Activated CD8-positive, alpha-beta memory T cell treated with anti-CD3 and anti-CD28 coated beads, Interleukin-2, amount 10 ng/mL, durations not matched to agents 7 days and 5 days (primary cell): ENCODE measurements at regions of chr10 and their contacts with region 1.

Region 1: DNA sequence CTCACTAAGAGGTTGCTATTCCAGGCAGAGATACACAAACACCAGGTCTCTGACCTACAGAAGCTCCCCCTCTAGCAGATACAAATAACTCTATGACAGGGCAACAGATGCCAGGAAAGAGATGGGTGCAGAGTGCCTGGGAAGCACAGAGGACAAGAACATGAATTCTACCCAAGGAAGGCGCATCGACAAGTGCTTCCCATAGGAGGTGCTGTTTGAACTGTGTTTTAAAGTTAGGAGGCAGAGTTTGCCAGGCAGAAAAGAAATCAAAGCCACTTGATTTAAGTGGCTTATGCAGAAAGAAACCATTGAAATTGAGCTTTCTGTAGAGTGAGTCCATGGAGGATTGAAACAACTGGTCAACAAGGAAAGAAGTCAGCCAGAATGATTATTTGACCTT is 35.3 kb upstream of the EGR2 start:
- DNase-seq: no peak
- ATAC-seq: no peak
- H3K4me3 Mint-ChIP-seq: no peak overlapping the region
- H3K27ac Mint-ChIP-seq: peak overlapping the region; percentile 13
- H3K4me1 Mint-ChIP-seq: peaks cover 55% of the 10 kb centered on the region
- H3K27me3 Mint-ChIP-seq: peaks cover 10% of the 10 kb centered on the region

Region 2: DNA sequence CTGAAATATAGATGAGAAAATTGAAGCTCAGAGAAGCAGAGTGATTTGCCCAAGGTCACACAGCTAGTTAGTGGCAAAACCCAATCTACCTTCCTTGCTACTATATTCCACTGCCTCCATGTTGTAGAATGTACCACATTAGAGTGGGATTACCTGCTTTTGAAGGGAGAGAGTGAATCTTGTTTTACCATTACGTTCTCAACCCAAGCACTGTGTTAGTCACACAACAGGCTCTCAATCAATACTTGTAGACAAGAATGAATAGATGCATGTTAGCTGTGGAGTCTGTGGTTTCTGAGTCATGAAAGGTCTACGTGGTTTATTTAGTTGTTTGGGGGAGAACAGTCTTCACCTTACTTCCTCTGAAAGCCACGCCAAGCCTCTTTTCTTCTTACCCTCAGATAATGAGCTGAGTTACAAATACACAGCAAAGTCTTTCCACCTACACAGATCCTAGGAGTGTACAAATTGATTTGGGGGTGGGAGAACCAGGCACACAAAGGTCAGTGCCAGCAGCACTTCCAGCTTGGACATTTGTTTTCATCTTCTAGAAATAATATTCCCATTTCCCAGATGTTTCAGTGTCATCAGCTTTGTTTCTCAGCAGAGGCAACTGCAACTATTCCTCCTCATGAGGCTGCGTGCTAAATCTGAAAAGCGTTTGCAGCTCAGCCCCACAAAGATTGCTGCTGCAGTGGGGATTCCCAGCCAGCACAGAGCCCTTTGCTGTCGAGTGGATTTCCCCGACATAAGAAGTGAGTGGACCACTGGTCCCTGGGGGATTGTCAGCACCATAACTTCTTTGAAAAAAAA is 118.4 kb before region 1 on chr10:
- CTCF ChIA-PET with region 1: interaction called, 11 read pairs
- DNase-seq: peak; percentile 78
- ATAC-seq: peak; percentile 90
- H3K4me3 Mint-ChIP-seq: no peak overlapping the region
- H3K27ac Mint-ChIP-seq: no peak overlapping the region
- H3K4me1 Mint-ChIP-seq: peaks cover 21% of the 10 kb centered on the region
- H3K27me3 Mint-ChIP-seq: peaks cover 26% of the 10 kb centered on the region

Region 3: DNA sequence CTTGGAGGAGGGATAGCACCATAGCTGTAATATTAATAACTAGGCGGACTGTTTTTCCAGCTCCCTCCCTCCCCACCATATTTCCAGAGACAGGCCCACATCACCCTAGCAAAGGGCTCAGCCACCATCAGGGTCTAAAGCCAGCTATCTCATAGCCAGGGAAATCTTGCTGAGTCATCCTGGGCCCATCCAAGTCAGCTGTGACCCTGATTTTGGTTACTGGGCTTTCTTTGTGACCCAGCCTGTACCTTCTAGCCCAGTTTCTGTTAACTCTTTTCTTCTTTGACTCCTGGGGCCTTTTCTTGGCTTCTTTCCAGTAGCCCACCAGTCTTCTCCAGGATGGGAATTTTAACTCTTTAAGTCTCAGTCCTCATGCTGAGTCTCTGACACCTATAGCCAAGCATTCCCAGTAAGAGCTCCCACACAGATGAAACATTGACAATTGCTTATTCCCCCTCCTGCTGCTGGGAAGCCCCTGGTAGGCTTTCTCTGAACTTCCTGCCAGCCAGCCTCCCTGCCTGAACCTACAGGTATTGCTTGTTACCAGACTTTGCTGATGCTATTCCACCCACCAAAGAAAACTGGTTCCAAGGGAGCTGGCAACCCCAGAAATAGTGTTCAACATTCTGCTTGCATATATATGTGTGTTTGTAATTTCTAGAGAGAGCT is 81.7 kb before region 1 on chr10:
- CTCF ChIA-PET with region 1: no interaction called
- DNase-seq: no peak
- ATAC-seq: no peak
- H3K4me3 Mint-ChIP-seq: no peak overlapping the region
- H3K27ac Mint-ChIP-seq: no peak overlapping the region
- H3K4me1 Mint-ChIP-seq: peaks cover 10% of the 10 kb centered on the region
- H3K27me3 Mint-ChIP-seq: peaks cover 19% of the 10 kb centered on the region

Region 4: DNA sequence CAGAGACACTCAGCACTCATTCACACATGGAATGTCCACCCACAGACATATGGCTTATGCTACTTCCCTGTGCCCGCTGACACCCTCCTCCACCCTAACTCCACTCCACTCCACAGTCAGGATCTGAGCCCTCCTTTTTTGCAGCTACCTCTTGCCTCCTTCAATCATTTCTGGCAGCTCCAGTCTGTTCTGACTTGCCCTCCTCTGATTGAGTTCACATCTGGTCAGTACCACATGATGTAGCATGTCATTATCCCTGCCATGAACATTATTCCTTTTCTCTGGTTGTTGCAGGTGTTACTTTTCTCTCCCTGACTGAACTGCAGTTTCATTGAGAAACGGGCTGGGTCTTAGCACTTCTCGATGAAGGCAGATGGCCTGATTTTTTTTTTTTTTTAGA is 94.8 kb after region 1 on chr10:
- CTCF ChIA-PET with region 1: no interaction called
- DNase-seq: no peak
- ATAC-seq: no peak
- H3K4me3 Mint-ChIP-seq: no peak overlapping the region
- H3K27ac Mint-ChIP-seq: no peak overlapping the region
- H3K4me1 Mint-ChIP-seq: no peaks in the 10 kb centered on the region
- H3K27me3 Mint-ChIP-seq: no peaks in the 10 kb centered on the region

Region 5: DNA sequence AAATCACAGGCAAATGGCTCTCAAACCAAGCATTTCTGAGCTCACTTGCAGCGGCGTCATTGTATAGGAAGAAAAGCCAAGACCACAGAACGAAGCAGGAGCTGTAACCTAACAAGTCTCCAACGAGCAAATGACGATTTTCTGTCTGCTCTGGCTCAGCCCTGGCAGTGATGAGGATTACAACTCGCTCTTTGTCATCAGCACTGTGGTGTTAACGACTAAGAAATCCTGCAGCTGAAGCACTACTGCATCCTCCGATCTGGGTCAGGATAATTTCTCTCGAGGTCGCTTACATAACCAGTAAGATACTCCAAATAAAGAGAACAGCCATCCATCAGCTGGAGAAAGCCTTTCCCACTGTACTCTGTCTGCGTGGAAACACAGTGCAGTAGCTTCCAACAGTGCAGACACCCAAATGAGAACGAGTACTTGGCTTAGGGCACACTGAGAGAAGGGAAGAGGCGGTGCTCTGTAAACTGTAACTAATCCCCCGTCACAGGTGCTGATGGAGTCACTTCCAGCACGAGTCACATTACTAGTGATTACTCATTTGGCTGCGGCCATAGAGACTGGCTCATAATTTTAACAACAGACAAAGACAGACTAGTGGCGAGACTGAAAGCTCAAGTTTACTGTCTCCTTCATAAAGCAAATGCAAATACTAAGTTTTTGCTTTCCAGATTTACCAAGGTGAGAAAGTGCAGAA is 417.5 kb after region 1 on chr10:
- CTCF ChIA-PET with region 1: no interaction called
- DNase-seq: peak; percentile 91
- ATAC-seq: peak; percentile 94
- H3K4me3 Mint-ChIP-seq: peak overlapping the region; percentile 97
- H3K27ac Mint-ChIP-seq: peak overlapping the region; percentile 99
- H3K4me1 Mint-ChIP-seq: peaks cover 17% of the 10 kb centered on the region
- H3K27me3 Mint-ChIP-seq: no peaks in the 10 kb centered on the region